AG04450 (cell line): ENCODE measurements at regions of chr6 and their contacts with region 1.

Region 1: DNA sequence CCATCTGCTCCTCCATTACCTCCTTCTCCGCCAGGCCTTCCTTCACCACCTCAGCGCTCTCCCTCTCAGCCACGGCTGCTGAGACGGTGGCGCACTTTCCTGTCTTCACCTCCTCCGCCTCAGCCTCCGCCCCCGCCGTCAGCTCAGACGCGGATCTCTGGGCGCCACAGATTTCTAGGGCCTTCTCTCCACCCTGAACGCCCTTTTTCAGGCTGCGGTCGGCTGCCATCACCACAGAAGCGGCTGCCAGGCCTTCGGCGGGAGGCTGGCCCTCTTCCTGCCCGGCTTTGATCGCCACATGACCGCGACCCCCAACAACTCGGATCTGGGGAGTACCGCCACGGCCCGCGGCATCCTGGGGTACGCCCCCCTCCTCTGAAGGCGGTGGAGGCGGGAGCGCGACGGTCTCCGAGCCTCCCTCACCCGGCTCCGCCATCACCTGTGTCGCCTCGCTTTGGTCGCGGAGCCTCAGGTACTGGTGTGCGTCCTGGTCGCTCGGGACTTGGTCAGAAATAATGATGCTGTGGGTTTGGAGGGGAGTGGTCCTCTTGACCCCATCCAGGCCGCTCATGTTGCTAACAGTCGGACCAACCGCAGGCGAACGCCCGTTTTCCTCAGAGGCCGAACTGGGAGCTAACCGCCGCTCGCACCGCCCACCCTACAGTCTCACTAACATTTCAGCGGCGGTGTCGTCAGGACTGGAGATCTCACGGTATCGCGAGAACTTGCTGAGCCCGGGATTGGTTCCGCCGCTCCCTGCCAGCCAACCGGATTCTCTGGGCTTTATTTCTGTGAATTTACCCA is at the start of gene TSPYL1:
- DNase-seq: peak; percentile 92
- H3K4me3 ChIP-seq: peak within 1 kb of the TSS; percentile 88
- H3K27ac ChIP-seq: peak within 1 kb of the TSS; percentile 97
- H3K27me3 ChIP-seq: no peaks in the 10 kb centered on the region
- CTCF ChIP-seq: 0 out of 2 replicates have a peak, but pooled peaks have one; percentile 6
- polyA plus RNA-seq, gene TSPYL1: 65.9 and 71.9 TPM in 2 replicates

Region 2: GRCh38 chr6:116329156-116329555 is 49.7 kb after region 1 on chr6:
- CTCF ChIA-PET with region 1: no interaction called
- POLR2A ChIA-PET with region 1: no interaction called
- DNase-seq: no peak
- H3K4me3 ChIP-seq: no peak overlapping the region
- H3K27ac ChIP-seq: no peak overlapping the region
- H3K27me3 ChIP-seq: no peaks in the 10 kb centered on the region
- CTCF ChIP-seq: no peak

Region 3: DNA sequence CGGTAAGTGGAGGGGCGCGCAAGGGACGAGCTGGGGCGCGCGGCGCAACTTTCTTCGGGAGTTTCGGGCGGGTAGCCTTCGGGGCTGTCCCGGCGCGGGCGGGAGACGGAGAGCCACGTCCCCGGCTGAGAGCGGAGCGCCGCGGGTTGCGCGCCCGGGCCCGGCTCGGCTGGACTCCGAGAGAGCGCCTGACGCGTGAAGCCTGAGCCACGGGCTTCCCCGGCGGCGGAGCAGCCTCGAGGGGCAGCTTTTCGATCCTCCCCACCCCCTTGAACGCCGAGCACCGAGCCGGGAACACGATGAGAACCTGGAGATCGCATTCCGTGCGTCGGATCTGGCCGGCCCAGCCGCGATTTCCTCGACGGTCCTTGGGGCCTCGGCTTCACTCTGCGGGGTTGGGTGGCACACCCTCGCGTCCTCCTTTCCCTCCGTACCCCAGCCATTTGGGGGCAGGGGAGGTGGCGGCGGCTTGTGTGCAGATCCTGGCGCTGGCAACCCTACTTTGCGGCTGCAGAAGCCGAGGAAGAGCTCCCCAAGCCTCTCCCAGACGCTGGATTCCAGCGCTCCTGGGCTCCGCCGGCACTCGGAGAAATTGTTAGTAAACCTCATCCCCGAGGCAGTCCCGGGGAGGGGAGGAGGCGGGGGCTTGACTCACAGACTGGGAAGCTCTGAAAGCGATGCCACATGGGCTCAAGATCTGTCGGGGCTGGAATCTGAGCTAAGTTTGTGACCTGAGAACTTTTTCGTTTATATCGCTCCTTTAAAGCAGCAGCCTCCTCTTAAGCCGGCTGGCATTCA is 91.9 kb after region 1 on chr6:
- CTCF ChIA-PET with region 1: no interaction called
- POLR2A ChIA-PET with region 1: interaction called, 15 read pairs
- DNase-seq: peak; percentile 81
- H3K4me3 ChIP-seq: peak overlapping the region; percentile 88
- H3K27ac ChIP-seq: peak overlapping the region; percentile 98
- H3K27me3 ChIP-seq: no peaks in the 10 kb centered on the region
- CTCF ChIP-seq: no peak

Region 4: DNA sequence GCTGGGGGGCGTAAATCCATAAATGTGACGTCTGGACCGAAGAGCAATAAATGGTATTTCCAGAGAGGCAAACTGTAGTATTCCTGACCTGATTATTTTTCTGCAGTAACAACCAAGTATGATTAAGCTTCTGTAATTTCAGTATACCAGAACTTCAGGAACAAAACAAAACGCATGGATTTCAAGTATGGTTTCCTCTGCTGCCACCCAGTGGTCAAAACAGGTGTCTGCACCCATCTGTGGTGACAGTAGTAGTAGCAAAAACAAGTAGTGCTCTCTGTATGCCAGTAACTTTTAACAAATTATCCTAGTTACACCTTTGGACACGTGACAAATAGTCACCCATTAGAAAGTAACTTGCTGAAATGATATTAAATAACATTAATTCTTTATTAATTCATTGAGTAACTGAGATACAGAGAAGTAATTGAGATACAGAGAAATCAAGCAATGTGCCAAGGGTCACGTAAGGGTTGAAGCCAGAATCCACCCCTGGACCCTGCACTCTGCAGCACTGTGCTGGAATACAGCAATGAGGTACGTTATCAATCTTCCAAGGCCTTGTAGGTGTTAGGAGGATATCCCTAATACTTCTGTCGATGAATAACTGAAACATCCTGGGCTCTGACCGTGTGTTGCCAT is 282.0 kb after region 1 on chr6:
- CTCF ChIA-PET with region 1: interaction called, 19 read pairs
- POLR2A ChIA-PET with region 1: interaction called, 5 read pairs
- DNase-seq: peak; percentile 51
- H3K4me3 ChIP-seq: no peak overlapping the region
- H3K27ac ChIP-seq: no peak overlapping the region
- H3K27me3 ChIP-seq: no peaks in the 10 kb centered on the region
- CTCF ChIP-seq: peak; percentile 91